Tibial artery (tissue), 4 donors: ENCODE measurements at regions of chr10 and their contacts with region 1.

Region 1: DNA sequence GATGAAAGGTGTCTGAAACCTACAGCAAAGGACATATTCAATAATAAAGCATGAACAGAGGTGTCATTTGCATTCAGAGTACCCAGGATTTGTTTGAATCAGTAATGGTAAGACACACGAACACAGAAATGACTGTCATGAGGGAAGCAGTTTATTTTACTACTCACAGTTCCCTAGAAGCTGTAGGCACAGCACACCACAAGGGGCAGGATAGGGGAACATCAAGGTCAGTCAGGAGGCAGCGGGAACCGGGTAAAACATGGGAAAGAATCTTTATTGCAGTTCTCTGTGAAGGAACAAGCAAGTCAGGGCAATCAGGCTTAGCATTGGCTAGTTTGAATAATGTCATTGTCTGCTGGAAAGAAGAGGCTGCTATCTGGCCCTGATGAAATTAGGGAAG is 70.2 kb upstream of the PDSS1 start:
- DNase-seq: no peak
- H3K4me3 ChIP-seq: no peak overlapping the region
- H3K27ac ChIP-seq: no peak overlapping the region
- H3K4me1 ChIP-seq: peaks cover 0 to 3% (median under 1%) of the 10 kb centered on the region in 4 donors
- H3K27me3 ChIP-seq: peaks cover 0 to 1% of the 10 kb centered on the region in 2 donors
- CTCF ChIP-seq: no peak

Region 2: GRCh38 chr10:27319752-27320561 is 692.6 kb after region 1 on chr10:
- intact Hi-C with region 1: loop called (anchors 5 kb)
- DNase-seq: peak; percentile 64 to 69
- H3K4me3 ChIP-seq: peak overlapping the region; percentile 26 to 41
- H3K27ac ChIP-seq: no peak overlapping the region
- H3K4me1 ChIP-seq: peaks cover 0 to 9% (median 2%) of the 10 kb centered on the region in 4 donors
- H3K27me3 ChIP-seq: peaks cover 0 to 13% of the 10 kb centered on the region in 2 donors
- CTCF ChIP-seq: no peak